A549 (cell line): ENCODE measurements at regions of chr4 and their contacts with region 1.

Region 1: GRCh38 chr4:77697860-77698590 is 92.4 kb downstream of the CXCL13 start:
- DNase-seq: peak; percentile 10 to 65
- ATAC-seq: peak; percentile 86 to 89; a peak in 5 of 6 replicates
- H3K4me3 ChIP-seq: no peak overlapping the region
- H3K27ac ChIP-seq: peak overlapping the region; percentile 17 to 44; a peak in 3 of 6 replicates
- H3K4me1 ChIP-seq: peaks cover 38% of the 10 kb centered on the region
- CTCF ChIP-seq: peak; percentile 61
- EP300 ChIP-seq: no peak
- POLR2A ChIP-seq: no peak
- RAD21 ChIP-seq: peak; percentile 78 to 81

Region 2: DNA sequence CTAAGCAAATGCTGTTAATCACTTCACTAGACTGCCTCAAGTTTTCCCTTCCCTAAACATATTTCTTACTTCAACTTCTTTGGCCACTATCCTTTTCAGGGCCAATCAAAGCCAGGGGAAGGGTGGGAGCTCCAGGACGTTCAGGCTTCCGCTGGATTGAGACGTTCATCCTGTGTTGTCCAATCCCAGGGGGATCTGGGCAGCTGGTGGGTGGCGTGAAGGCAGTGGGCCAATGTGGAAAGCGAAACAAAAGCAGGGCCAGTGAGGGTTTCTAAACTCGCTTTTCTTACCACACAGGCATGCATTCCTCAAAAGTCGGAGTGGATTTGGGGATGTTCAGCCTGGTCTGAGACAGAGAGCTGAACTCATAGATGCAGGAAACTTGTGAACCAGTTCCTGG is 84.8 kb before region 1 on chr4:
- CTCF ChIA-PET with region 1: interaction called, 20 read pairs
- POLR2A ChIA-PET with region 1: no interaction called
- DNase-seq: no peak
- ATAC-seq: no peak
- H3K4me3 ChIP-seq: no peak overlapping the region
- H3K27ac ChIP-seq: no peak overlapping the region
- H3K4me1 ChIP-seq: no peaks in the 10 kb centered on the region
- CTCF ChIP-seq: no peak
- EP300 ChIP-seq: no peak
- POLR2A ChIP-seq: no peak
- RAD21 ChIP-seq: no peak

Region 3: DNA sequence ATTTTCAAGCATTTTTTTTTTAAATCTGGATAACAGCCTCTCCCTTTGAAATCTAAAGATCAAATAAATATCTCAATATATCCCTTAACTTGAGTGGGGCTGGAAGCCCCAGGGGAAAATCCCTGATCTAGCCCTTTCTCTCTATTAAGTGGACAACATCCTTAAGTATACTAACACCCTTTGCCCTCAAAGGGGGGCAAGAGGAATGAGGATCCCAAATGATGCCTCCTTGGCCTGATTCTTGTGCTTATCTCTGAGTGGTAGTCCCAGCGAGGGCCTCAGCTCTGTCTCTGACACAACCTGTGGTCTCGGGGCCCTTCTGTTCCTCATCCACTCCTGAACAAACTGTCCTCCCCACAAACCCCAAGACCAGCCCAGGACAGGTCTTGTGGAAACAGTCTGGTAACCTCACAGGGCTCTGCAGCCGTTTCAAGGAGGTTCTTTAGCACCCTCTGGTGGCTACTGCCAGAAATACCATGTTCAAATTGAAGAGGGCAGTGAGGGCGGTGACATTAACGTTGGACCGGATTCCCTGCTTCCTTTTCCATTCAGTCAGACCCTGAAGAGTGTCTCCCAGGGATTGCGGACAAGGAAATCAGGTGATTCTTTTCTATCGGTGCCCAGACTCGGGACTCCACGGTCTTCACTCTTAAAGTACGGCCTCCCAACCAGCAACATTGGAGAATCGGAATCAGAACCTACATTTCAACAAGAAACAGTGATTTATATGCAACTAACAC is 79.5 kb before region 1 on chr4:
- CTCF ChIA-PET with region 1: interaction called, 20 read pairs
- POLR2A ChIA-PET with region 1: no interaction called
- DNase-seq: peak; percentile 59 to 64
- ATAC-seq: peak; percentile 98 to 100
- H3K4me3 ChIP-seq: no peak overlapping the region
- H3K27ac ChIP-seq: peak overlapping the region in 1 of 2 experiments; percentile 69; a peak in 3 of 6 replicates
- H3K4me1 ChIP-seq: no peaks in the 10 kb centered on the region
- CTCF ChIP-seq: peak; percentile 65
- EP300 ChIP-seq: no peak
- POLR2A ChIP-seq: no peak
- RAD21 ChIP-seq: peak; percentile 66 to 68